Right ventricle myocardium inferior (tissue), 1 donor: ENCODE measurements at regions of chr4 and their contacts with region 1.

Region 1: DNA sequence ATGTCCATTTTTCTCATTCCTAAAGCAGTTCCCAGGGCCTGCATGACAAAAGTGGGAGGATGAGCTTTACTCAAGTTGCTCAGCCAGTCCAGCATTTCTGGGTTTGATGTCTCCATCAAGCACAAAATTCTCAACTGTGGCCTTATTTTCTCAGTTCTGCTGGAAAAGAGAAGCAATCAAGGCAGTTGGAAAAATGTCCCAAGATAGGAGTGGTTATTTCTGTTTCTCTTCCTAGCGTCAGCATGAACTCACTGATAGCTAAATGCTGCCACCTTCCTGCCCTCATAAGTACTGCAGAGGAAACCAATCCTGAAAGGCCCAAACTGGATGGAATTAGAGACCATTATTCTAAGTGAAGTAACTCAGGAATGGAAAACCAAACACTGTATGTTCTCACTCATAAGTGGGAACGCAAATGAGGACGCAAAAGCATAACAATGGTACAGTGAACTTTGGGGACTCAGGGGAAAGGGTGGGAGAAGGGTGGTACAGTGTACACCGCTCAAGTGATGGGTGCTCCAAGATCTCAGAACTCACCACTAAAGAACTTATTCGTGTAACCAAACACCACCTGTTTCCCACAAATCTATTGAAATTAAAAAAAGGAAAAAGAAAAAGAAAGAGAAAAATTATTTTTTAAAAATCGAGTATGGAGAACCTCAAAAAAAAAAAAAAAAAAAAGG is 29.6 kb downstream of the ADH7 start:
- DNase-seq: no peak
- ATAC-seq: peak; percentile 82

Region 2: GRCh38 chr4:98467627-98468072 is 937.9 kb before region 1 on chr4:
- intact Hi-C with region 1: loop called (anchors 5 kb)
- DNase-seq: no peak
- ATAC-seq: peak; percentile 89

Region 3: GRCh38 chr4:98745366-98745765 is 660.2 kb before region 1 on chr4:
- intact Hi-C with region 1: loop called (anchors 10 kb)
- DNase-seq: no peak
- ATAC-seq: no peak

Region 4: GRCh38 chr4:98939892-98940298 is 465.7 kb before region 1 on chr4:
- intact Hi-C with region 1: loop called (anchors 2 kb)
- DNase-seq: no peak
- ATAC-seq: no peak

Region 5: GRCh38 chr4:99117876-99118693 is 287.5 kb before region 1 on chr4:
- intact Hi-C with region 1: loop called (anchors 1 kb)
- DNase-seq: no peak
- ATAC-seq: no peak

Region 6: GRCh38 chr4:99201690-99202089 is 203.9 kb before region 1 on chr4:
- intact Hi-C with region 1: loop called (anchors 2 kb)
- DNase-seq: no peak
- ATAC-seq: peak; percentile 69

Region 7: DNA sequence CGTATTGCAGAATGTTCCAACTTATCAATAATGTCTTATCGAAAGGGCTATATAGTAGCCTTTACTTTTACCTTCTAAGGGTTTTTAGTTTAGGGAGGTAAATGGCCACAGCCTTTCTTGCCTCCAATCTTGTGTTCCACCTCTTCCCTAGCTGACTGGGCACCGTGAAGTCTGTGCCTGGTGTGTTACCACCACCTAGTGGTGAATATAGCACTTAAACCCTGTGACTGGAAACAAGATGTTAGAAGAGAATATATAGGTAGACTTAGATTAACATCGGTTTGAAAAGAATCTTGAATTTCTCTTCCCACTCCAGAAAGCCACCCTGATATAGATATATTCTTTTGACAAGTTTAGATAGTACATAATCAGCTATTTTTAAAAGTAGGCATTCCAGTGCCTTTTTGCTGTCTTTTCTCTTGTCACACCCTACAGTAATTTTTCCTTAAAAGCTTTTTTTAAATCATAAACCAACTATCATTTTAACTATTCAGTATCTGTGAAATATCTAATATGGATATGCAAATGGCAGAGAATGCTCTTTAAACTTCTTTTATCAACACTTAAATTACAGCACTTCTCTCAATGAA is 57.4 kb after region 1 on chr4:
- intact Hi-C with region 1: loop called (anchors 2 kb)
- DNase-seq: no peak
- ATAC-seq: peak; percentile 75